B cell (primary cell): ENCODE measurements at regions of chr6 and their contacts with region 1.

Region 1: GRCh38 chr6:35297601-35298481 is at the start of gene DEF6:
- DNase-seq: peak; percentile 91
- ATAC-seq: peak; percentile 74
- H3K4me3 ChIP-seq: peak within 1 kb of the TSS; percentile 79 to 97 (median 95)
- H3K4me3 Mint-ChIP-seq: peak within 1 kb of the TSS; percentile 82
- H3K27ac ChIP-seq: peak within 1 kb of the TSS; percentile 87 to 98
- H3K27ac Mint-ChIP-seq: peak within 1 kb of the TSS; percentile 97
- H3K4me1 ChIP-seq: peaks cover 48 to 54% of the 10 kb centered on the region in 2 donors
- H3K4me1 Mint-ChIP-seq: peaks cover 50% of the 10 kb centered on the region
- H3K27me3 ChIP-seq: no peaks in the 10 kb centered on the region
- H3K27me3 Mint-ChIP-seq: no peaks in the 10 kb centered on the region
- CTCF ChIP-seq: peak; percentile 97
- total RNA-seq, gene DEF6: 105 and 116 TPM in 2 replicates

Region 2: GRCh38 chr6:35259194-35259947 is 38.5 kb before region 1 on chr6 and contains the start of gene ZNF76:
- CTCF ChIA-PET with region 1: interaction called, 10 read pairs
- POLR2A ChIA-PET with region 1: no interaction called
- intact Hi-C with region 1: loop called (anchors 2 kb)
- DNase-seq: peak; percentile 97
- ATAC-seq: peak; percentile 81
- H3K4me3 ChIP-seq: peak within 1 kb of the TSS; percentile 63 to 90 (median 81)
- H3K4me3 Mint-ChIP-seq: peak within 1 kb of the TSS; percentile 99
- H3K27ac ChIP-seq: peak within 1 kb of the TSS; percentile 97 to 98
- H3K27ac Mint-ChIP-seq: peak within 1 kb of the TSS; percentile 98
- H3K4me1 ChIP-seq: peaks cover 21 to 30% of the 10 kb centered on the region in 2 donors
- H3K4me1 Mint-ChIP-seq: peaks cover 47% of the 10 kb centered on the region
- H3K27me3 ChIP-seq: no peaks in the 10 kb centered on the region
- H3K27me3 Mint-ChIP-seq: no peaks in the 10 kb centered on the region
- CTCF ChIP-seq: no peak
- total RNA-seq, gene ZNF76: 96.9 and 107 TPM in 2 replicates

Region 3: GRCh38 chr6:35311390-35312075 is 13.7 kb after region 1 on chr6:
- CTCF ChIA-PET with region 1: interaction called, 87 read pairs
- POLR2A ChIA-PET with region 1: interaction called, 7 read pairs
- intact Hi-C with region 1: loop called (anchors 1 kb)
- DNase-seq: peak; percentile 60
- ATAC-seq: peak; percentile 65
- H3K4me3 ChIP-seq: peak overlapping the region in 4 of 5 experiments; percentile 16 to 48 (median 44)
- H3K4me3 Mint-ChIP-seq: peak overlapping the region; percentile 81
- H3K27ac ChIP-seq: peak overlapping the region; percentile 78 to 89
- H3K27ac Mint-ChIP-seq: peak overlapping the region; percentile 99
- H3K4me1 ChIP-seq: peaks cover 41 to 44% of the 10 kb centered on the region in 2 donors
- H3K4me1 Mint-ChIP-seq: peaks cover 72% of the 10 kb centered on the region
- H3K27me3 ChIP-seq: no peaks in the 10 kb centered on the region
- H3K27me3 Mint-ChIP-seq: no peaks in the 10 kb centered on the region
- CTCF ChIP-seq: no peak

Region 4: GRCh38 chr6:35327349-35328027 is 29.6 kb after region 1 on chr6:
- CTCF ChIA-PET with region 1: interaction called, 301 read pairs
- POLR2A ChIA-PET with region 1: interaction called, 7 read pairs
- intact Hi-C with region 1: loop called (anchors 1 kb)
- DNase-seq: peak; percentile 80
- ATAC-seq: peak; percentile 87
- H3K4me3 ChIP-seq: no peak overlapping the region
- H3K4me3 Mint-ChIP-seq: no peak overlapping the region
- H3K27ac ChIP-seq: peak overlapping the region in 1 of 2 donors; percentile 11
- H3K27ac Mint-ChIP-seq: peak overlapping the region; percentile 74
- H3K4me1 ChIP-seq: peaks cover 11 to 15% of the 10 kb centered on the region in 2 donors
- H3K4me1 Mint-ChIP-seq: peaks cover 16% of the 10 kb centered on the region
- H3K27me3 ChIP-seq: no peaks in the 10 kb centered on the region
- H3K27me3 Mint-ChIP-seq: no peaks in the 10 kb centered on the region
- CTCF ChIP-seq: peak; percentile 76

Region 5: GRCh38 chr6:35452186-35453090 is 154.6 kb after region 1 on chr6 and contains the start of gene FANCE:
- CTCF ChIA-PET with region 1: interaction called, 116 read pairs
- POLR2A ChIA-PET with region 1: interaction called, 4 read pairs
- intact Hi-C with region 1: loop called (anchors 1 kb)
- DNase-seq: peak; percentile 90
- ATAC-seq: peak; percentile 92
- H3K4me3 ChIP-seq: peak within 1 kb of the TSS; percentile 70 to 89 (median 79)
- H3K4me3 Mint-ChIP-seq: peak within 1 kb of the TSS; percentile 86
- H3K27ac ChIP-seq: peak within 1 kb of the TSS; percentile 23 to 25
- H3K27ac Mint-ChIP-seq: peak within 1 kb of the TSS; percentile 63
- H3K4me1 ChIP-seq: peaks cover 14 to 21% of the 10 kb centered on the region in 2 donors
- H3K4me1 Mint-ChIP-seq: peaks cover 33% of the 10 kb centered on the region
- H3K27me3 ChIP-seq: no peaks in the 10 kb centered on the region
- H3K27me3 Mint-ChIP-seq: no peaks in the 10 kb centered on the region
- CTCF ChIP-seq: no peak
- total RNA-seq, gene FANCE: 12.7 and 12.8 TPM in 2 replicates

Region 6: GRCh38 chr6:35552285-35552917 is 254.6 kb after region 1 on chr6:
- CTCF ChIA-PET with region 1: interaction called, 14 read pairs
- POLR2A ChIA-PET with region 1: no interaction called
- intact Hi-C with region 1: no loop called
- DNase-seq: peak; percentile 51
- ATAC-seq: no peak
- H3K4me3 ChIP-seq: no peak overlapping the region
- H3K4me3 Mint-ChIP-seq: no peak overlapping the region
- H3K27ac ChIP-seq: no peak overlapping the region
- H3K27ac Mint-ChIP-seq: no peak overlapping the region
- H3K4me1 ChIP-seq: no peaks in the 10 kb centered on the region
- H3K4me1 Mint-ChIP-seq: no peaks in the 10 kb centered on the region
- H3K27me3 ChIP-seq: peaks cover 0 to 9% (median 2%) of the 10 kb centered on the region in 4 experiments
- H3K27me3 Mint-ChIP-seq: peaks cover 25% of the 10 kb centered on the region
- CTCF ChIP-seq: peak; percentile 76

Region 7: DNA sequence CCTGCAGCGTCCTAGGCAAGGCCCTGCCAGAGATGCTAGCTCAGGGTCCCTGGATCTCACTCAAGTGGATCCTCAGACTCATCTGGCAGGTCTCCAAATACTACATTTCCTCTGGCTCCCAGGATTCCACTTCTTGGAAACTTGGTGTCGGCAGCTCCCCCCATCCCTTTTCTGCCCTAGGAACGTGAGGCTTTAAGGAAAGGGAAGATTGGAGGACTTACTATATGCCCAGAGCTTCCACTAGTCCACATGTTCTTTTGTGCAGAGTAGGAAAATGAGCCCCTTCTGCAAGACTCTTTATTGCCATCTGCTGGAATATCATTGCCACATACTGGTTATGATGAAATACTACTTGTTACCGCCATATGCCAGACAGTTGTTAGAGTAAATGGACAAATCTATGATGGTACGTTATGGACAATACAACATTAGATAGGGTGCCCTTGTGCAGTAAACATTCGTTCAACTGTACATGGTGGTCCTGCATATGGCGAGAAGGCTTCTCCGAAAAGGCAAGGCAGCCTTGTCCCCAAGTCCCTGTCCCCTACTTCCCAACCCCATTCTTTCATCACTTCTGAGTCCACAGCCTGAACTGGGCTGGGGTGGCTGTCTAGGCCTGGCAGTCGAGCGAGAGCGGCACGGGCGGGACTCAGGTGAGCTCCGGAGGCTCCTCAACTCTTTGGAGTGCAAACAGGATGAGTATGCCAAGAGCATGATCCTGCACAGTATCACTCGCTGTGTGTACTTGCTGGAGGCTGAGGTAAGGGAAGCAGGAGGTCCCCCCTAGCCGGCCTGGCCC is 439.8 kb after region 1 on chr6:
- CTCF ChIA-PET with region 1: interaction called, 25 read pairs
- POLR2A ChIA-PET with region 1: no interaction called
- intact Hi-C with region 1: loop called (anchors 1 kb)
- DNase-seq: peak; percentile 81
- ATAC-seq: peak; percentile 69
- H3K4me3 ChIP-seq: no peak overlapping the region
- H3K4me3 Mint-ChIP-seq: no peak overlapping the region
- H3K27ac ChIP-seq: no peak overlapping the region
- H3K27ac Mint-ChIP-seq: peak overlapping the region; percentile 60
- H3K4me1 ChIP-seq: peaks cover 8 to 19% of the 10 kb centered on the region in 2 donors
- H3K4me1 Mint-ChIP-seq: peaks cover 22% of the 10 kb centered on the region
- H3K27me3 ChIP-seq: no peaks in the 10 kb centered on the region
- H3K27me3 Mint-ChIP-seq: no peaks in the 10 kb centered on the region
- CTCF ChIP-seq: peak; percentile 81